ENCODE measurements at regions of chr11 and their contacts with region 1.

Region 1: GRCh38 chr11:75823415-75824345 is 8.7 kb downstream of the UVRAG start:
- DNase-seq: no peak
- H3K4me3 ChIP-seq: no peak overlapping the region
- H3K4me3 Mint-ChIP-seq: peak overlapping the region in 5 of 8 donors; percentile 12 to 76 (median 36)
- H3K27ac ChIP-seq: no peak overlapping the region
- H3K27ac Mint-ChIP-seq: peak overlapping the region in 4 of 7 donors; percentile 6 to 87 (median 48)
- H3K4me1 ChIP-seq: peaks cover 27% of the 10 kb centered on the region
- H3K4me1 Mint-ChIP-seq: peaks cover 27 to 51% (median 37%) of the 10 kb centered on the region in 4 donors
- H3K27me3 ChIP-seq: no peaks in the 10 kb centered on the region
- H3K27me3 Mint-ChIP-seq: no peaks in the 10 kb centered on the region

Region 2: GRCh38 chr11:75802913-75803820 is 20.5 kb before region 1 on chr11:
- CTCF ChIA-PET with region 1: interaction called, 25 read pairs
- POLR2A ChIA-PET with region 1: no interaction called
- intact Hi-C with region 1: no loop called
- DNase-seq: peak; percentile 59 to 68 (median 61)
- H3K4me3 ChIP-seq: no peak overlapping the region
- H3K4me3 Mint-ChIP-seq: no peak overlapping the region
- H3K27ac ChIP-seq: no peak overlapping the region
- H3K27ac Mint-ChIP-seq: peak overlapping the region in 2 of 7 donors; percentile 23 to 44
- H3K4me1 ChIP-seq: peaks cover 20% of the 10 kb centered on the region
- H3K4me1 Mint-ChIP-seq: peaks cover 9 to 35% (median 20%) of the 10 kb centered on the region in 4 donors
- H3K27me3 ChIP-seq: no peaks in the 10 kb centered on the region
- H3K27me3 Mint-ChIP-seq: no peaks in the 10 kb centered on the region

Measured in CD4-positive, alpha-beta memory T cell (primary cell).